Activated CD8-positive, alpha-beta T cell treated with anti-CD3 and anti-CD28 coated beads, Interleukin-2, amount 10 ng/mL, durations not matched to agents 7 days and 5 days (primary cell): ENCODE measurements at regions of chr4 and their contacts with region 1.

Region 1: DNA sequence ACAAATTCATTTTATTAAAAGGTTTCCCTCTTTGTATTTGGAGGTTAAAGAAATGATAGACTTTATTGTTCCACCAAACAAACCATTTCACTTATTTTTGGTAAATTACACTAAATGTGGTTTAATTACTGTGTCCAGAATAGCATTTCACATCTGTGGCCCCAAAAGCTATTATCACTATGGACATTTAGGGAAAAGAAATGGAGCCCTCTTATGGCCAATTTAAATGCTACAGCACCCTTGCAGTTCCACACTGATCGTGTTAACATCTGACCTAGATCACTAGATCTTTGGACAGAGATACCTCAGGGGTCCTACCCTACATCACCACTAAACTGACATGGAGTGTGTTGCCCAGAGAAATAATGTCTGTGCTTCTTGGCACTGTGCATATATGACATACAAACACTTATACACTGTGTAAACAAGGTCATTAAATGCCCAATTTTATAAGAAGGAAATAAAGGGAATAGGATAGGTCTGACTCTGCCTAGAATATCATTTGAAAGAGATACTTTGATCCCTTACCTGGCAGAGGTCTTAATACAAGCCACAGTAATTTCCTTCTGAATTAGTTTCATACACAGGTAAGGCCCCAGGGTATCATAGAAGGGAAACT is 163.9 kb downstream of the KDR start:
- DNase-seq: no peak
- ATAC-seq: peak; percentile 55
- H3K4me3 Mint-ChIP-seq: no peak overlapping the region
- H3K27ac Mint-ChIP-seq: no peak overlapping the region
- H3K4me1 Mint-ChIP-seq: peaks cover 19% of the 10 kb centered on the region
- H3K27me3 Mint-ChIP-seq: peaks cover 9% of the 10 kb centered on the region

Region 2: GRCh38 chr4:54322818-54323417 is 638.5 kb before region 1 on chr4:
- CTCF ChIA-PET with region 1: interaction called, 11 read pairs
- POLR2A ChIA-PET with region 1: no interaction called
- DNase-seq: peak; percentile 67
- ATAC-seq: peak; percentile 60
- H3K4me3 Mint-ChIP-seq: no peak overlapping the region
- H3K27ac Mint-ChIP-seq: no peak overlapping the region
- H3K4me1 Mint-ChIP-seq: no peaks in the 10 kb centered on the region
- H3K27me3 Mint-ChIP-seq: no peaks in the 10 kb centered on the region

Region 3: DNA sequence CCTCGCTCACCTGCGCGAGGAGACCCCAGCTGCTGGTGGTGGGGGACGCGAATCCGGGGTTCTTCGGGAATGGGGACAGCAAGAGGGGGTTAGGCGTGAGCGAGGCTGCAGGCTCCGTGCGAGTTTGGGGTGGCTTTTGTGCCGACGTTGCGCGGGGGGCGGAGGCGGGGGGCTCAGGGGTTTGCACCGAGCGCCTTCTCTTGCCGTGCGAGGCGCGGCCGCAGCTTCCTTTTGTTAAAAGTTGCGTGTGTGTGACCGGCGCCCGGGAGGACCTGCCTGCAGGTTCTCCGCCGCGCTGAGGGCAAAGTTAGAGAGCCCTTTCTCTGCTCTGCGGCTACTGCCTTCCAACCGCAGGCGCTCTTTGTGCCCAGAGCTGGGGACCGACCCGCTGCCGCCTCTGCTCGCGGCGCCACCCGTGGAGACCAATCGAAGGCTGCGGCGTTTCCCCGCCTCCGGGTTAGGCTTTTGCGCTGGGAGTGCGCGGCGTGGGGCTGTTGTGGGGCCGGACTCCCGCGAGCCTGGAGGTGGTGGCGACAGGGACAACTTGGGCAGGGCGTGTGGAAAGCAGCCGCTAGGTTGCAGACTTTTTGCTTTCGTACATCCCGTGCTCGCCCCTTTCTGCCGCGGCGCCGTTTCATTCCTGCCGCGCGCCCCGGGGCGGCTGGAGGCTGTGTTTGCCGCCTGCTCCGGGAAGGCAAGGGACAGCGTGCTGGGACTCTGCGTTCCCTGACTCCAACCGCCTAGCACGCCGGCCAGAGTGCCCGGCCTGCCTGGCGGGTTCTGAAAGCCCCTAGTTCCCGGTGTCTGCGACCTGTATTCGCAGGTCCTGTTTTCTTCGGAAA is 303.0 kb before region 1 on chr4:
- CTCF ChIA-PET with region 1: interaction called, 12 read pairs
- POLR2A ChIA-PET with region 1: no interaction called
- DNase-seq: peak; percentile 63
- ATAC-seq: peak; percentile 74
- H3K4me3 Mint-ChIP-seq: peak overlapping the region; percentile 80
- H3K27ac Mint-ChIP-seq: peak overlapping the region; percentile 28
- H3K4me1 Mint-ChIP-seq: peaks cover 25% of the 10 kb centered on the region
- H3K27me3 Mint-ChIP-seq: peaks cover 68% of the 10 kb centered on the region

Region 4: GRCh38 chr4:54683616-54684346 is 277.7 kb before region 1 on chr4:
- CTCF ChIA-PET with region 1: interaction called, 25 read pairs
- POLR2A ChIA-PET with region 1: no interaction called
- DNase-seq: peak; percentile 74
- ATAC-seq: peak; percentile 76
- H3K4me3 Mint-ChIP-seq: peak overlapping the region; percentile 62
- H3K27ac Mint-ChIP-seq: peak overlapping the region; percentile 93
- H3K4me1 Mint-ChIP-seq: peaks cover 46% of the 10 kb centered on the region
- H3K27me3 Mint-ChIP-seq: no peaks in the 10 kb centered on the region

Region 5: DNA sequence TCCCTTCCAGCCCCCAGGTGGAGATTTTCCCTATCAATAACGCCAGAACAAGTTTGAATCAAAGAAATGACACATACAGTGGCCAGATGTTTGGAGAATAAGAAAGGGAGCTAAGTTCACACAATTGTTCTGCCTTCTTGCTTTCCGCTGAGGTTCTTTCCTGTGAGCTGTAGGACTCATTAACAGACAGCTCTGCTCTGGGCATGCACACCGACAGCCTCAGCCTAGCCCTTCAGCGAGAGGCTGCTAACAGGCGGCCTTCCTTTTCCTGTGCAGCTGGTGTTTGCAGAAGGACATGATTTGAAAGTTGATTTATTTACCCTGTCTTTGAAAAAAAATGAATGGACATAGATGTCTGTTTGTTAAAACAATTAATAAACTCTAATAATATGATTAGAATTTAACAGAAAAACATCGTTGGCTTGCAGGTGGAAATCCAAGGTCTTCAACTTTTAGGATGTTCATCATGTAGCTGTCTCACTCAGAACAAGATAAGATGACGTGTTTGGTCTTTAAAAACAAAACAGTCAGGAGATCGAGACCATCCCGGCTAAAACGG is 19.4 kb before region 1 on chr4:
- CTCF ChIA-PET with region 1: interaction called, 37 read pairs
- POLR2A ChIA-PET with region 1: no interaction called
- DNase-seq: peak; percentile 66
- ATAC-seq: peak; percentile 83
- H3K4me3 Mint-ChIP-seq: peak overlapping the region; percentile 36
- H3K27ac Mint-ChIP-seq: peak overlapping the region; percentile 78
- H3K4me1 Mint-ChIP-seq: peaks cover 40% of the 10 kb centered on the region
- H3K27me3 Mint-ChIP-seq: no peaks in the 10 kb centered on the region

Region 6: DNA sequence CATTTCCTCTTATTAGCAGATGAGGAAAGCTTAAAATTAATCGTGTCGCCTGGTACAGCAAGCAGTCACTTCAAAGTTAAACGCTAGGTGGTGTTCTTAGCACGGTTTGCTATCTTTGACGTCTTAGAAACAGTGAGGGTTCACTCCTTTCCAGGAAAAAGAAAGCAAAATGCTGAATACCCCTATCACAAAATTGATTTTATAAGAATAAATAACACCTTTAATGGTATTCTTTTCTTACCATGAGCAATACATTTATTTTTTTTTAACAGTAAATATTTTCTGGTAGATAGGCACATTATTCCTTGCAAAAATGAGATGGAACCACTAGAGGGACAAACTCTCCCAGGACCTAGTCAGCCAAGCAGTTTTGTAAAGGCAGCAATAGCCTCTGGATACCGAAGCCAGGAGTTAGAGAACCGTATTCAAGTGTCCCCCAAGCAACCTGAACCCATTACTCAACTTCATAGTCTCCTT is 10.0 kb after region 1 on chr4:
- CTCF ChIA-PET with region 1: interaction called, 18 read pairs
- POLR2A ChIA-PET with region 1: no interaction called
- DNase-seq: peak; percentile 25
- ATAC-seq: no peak
- H3K4me3 Mint-ChIP-seq: no peak overlapping the region
- H3K27ac Mint-ChIP-seq: no peak overlapping the region
- H3K4me1 Mint-ChIP-seq: no peaks in the 10 kb centered on the region
- H3K27me3 Mint-ChIP-seq: peaks cover 5% of the 10 kb centered on the region

Region 7: GRCh38 chr4:55143863-55144262 is 182.4 kb after region 1 on chr4:
- CTCF ChIA-PET with region 1: no interaction called
- POLR2A ChIA-PET with region 1: no interaction called
- DNase-seq: no peak
- ATAC-seq: no peak
- H3K4me3 Mint-ChIP-seq: no peak overlapping the region
- H3K27ac Mint-ChIP-seq: no peak overlapping the region
- H3K4me1 Mint-ChIP-seq: no peaks in the 10 kb centered on the region
- H3K27me3 Mint-ChIP-seq: peaks cover 7% of the 10 kb centered on the region